ENCODE measurements at regions of chr1 and their contacts with region 1.

Region 1: DNA sequence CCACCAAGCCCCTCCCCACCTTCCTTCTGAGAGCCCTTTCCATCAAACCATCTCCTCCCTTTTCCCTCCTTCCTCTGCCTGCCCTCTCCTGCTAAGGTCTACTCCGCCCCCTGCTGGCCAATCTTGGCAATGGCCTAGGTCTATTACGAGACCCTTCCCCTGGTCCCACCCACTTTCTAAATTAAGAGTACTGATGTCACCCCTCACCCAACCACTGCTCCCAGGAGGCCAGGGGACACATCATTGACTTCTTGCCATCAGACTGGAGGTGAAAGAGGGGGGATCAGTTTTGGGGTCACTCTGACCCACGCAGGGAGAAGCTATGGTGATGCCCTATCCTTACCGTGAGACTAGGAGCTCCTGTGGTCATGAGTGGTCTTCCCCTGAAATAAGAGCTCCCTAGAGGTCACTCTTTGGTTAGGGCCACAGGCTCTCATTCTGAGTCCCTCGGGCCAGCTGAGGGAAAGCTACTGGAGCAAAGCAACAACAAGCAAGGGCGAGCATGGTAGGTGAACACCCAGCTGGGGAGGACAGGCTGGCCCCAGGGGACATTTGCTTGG is 34.6 kb upstream of the S100A7 start:
- DNase-seq: peak; percentile 93

Region 2: DNA sequence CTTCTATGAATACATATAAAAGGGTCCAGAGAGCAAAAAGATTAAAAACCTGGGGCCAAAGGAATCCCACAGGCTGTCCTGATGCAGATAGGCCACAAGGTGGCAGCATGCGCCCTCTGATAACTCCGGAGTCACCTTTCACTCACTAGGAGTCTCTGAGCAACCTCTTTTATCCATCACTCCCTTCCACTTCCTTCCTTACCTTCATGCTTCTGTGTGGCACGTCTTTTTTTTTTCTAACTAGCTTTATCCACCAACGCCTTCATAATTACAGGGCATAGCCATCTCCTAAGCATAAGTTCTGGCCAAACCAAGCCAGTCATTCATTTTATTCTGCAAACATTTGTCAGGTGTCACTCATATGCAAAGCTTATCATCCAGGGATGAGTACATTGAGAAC is 142.5 kb before region 1 on chr1:
- intact Hi-C with region 1: loop called (anchors 5 kb)
- DNase-seq: peak; percentile 88

Measured in posterior vena cava (tissue), 2 donors.